ENCODE measurements at regions of chr15 and their contacts with region 1.

Region 1: DNA sequence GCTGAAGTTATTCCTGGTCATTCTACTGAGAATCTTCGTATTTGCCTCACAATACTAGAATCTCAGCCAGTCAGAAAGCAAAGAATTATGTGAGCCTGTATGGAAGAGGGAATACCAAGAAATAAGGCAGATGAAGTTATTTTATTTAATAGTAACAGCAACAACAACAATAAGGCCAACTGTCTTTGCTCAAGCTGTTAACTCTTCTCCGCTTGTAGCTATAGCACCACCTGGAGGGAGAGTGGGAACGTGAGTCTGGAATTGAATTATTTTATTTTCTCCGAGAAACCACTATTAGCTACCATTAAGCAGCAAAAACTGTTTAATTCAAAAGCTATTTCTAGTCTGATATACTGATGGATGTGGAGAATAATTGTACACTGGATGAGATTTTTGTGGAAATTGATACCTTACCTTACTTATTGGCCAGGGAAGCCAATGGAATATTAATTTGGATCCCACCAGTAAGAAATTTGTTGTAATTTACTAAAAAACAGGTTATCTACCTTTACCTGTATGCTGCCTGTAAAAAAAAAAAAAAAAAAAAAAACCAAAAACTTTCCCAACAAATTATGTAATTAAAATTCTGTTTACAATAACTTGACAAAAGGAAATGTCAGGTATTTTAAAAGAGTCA is 50.1 kb downstream of the CALML4 start:
- DNase-seq: peak; percentile 71
- H3K4me3 ChIP-seq: no peak overlapping the region
- H3K27ac ChIP-seq: no peak overlapping the region
- H3K4me1 ChIP-seq: no peaks in the 10 kb centered on the region
- H3K27me3 ChIP-seq: no peaks in the 10 kb centered on the region
- CTCF ChIP-seq: peak; percentile 49 to 58
- POLR2A ChIP-seq: no peak

Region 2: GRCh38 chr15:67839929-67840748 is 314.9 kb before region 1 on chr15 and contains the start of gene RNU6-1:
- CTCF ChIA-PET with region 1: interaction called, 12 read pairs
- POLR2A ChIA-PET with region 1: no interaction called
- dilution Hi-C with region 1: no loop called
- intact Hi-C with region 1: no loop called
- DNase-seq: peak; percentile 93
- H3K4me3 ChIP-seq: peak within 1 kb of the TSS; percentile 69 to 80 (median 75)
- H3K27ac ChIP-seq: peak within 1 kb of the TSS; percentile 82
- H3K4me1 ChIP-seq: peaks cover 25% of the 10 kb centered on the region
- H3K27me3 ChIP-seq: peaks cover 19 to 23% of the 10 kb centered on the region in 2 experiments
- CTCF ChIP-seq: no peak
- POLR2A ChIP-seq: peak; percentile 85
- total RNA-seq, gene RNU6-1: not detected in 2 replicates

Region 3: DNA sequence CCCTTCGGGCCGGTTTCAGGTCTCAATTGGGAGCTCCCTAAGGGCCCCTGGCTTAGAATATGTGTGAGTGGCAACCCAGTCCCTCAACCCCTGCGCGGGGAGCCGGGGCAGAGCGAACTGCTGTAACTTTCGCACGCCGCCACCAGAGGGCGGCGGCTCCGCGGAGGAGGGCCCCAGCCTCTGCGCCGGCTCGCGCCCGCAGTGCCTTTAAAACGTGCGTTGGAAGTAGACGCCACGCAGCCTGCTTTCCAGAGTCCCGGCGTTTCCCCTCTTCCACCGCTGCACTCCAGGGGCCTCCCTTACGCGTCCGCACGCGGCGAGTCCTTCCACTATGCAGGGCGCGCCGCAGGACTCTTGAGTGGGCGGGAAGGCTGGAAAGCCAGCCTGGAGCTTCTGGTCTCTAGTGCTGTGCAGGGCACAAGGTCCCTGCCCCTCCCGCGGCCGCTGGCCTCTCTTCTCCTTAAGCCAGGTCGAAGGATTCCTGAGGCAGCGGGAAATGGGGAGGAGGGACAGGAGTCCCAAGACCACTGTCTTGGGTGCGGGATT is 291.5 kb before region 1 on chr15:
- CTCF ChIA-PET with region 1: interaction called, 139 read pairs
- POLR2A ChIA-PET with region 1: no interaction called
- dilution Hi-C with region 1: no loop called
- intact Hi-C with region 1: loop called (anchors 1 kb)
- DNase-seq: peak; percentile 65
- H3K4me3 ChIP-seq: peak overlapping the region in 2 of 3 experiments; percentile 8 to 35
- H3K27ac ChIP-seq: no peak overlapping the region
- H3K4me1 ChIP-seq: no peaks in the 10 kb centered on the region
- H3K27me3 ChIP-seq: peaks cover 9 to 13% of the 10 kb centered on the region in 2 experiments
- CTCF ChIP-seq: peak; percentile 87 to 97
- POLR2A ChIP-seq: no peak

Region 4: DNA sequence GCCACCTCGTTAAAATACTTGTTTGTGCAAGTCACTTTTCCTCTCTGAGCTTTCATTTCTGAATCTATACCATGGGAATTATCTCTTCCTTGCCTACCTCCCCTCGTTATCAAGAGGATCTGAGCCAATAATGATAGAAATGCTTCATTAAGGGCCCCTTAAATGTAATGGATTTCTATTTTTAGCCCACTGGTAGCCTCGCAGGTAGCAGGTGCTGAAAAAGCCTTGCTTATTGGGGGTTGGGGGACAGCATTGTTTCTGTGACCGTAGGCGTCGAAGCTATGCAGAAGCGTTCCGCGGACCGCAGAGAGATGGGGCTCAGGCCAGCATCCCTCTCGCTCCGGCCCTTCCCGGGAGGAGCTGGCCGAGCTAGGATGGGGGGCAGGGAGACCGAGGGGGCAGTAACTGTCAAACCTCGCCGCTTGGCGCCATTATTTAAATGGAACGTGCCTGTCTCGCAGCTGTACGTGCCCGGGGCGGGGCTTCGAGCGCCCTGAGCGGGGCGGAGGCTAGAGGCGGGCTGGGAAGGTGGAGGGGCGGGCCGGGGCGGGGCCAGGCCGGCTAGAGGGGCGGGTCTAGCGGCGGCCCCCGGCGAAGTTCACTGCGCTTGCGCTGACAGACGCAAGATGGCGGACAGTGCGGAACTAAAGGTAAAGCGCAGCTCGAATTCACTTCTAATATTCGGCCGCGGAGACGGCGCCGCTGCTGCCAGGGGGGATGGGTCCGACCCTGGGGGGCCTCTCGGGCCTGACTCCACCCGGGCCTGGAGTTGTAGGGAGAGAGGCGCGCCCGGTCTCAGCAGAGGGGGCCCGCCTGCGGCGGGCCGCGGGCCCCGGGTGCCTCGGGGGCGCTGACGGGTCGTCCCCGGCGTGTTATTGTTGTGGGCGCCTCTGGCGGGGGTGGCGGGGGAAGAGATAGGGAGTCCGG is 101.1 kb before region 1 on chr15 and contains the start of gene PIAS1:
- CTCF ChIA-PET with region 1: interaction called, 41 read pairs
- POLR2A ChIA-PET with region 1: no interaction called
- dilution Hi-C with region 1: no loop called
- intact Hi-C with region 1: loop called (anchors 2 kb)
- DNase-seq: peak; percentile 95
- H3K4me3 ChIP-seq: peak within 1 kb of the TSS; percentile 88 to 97 (median 91)
- H3K27ac ChIP-seq: peak within 1 kb of the TSS; percentile 39
- H3K4me1 ChIP-seq: peaks cover 15% of the 10 kb centered on the region
- H3K27me3 ChIP-seq: peaks cover 1 to 7% of the 10 kb centered on the region in 2 experiments
- CTCF ChIP-seq: no peak
- POLR2A ChIP-seq: peak; percentile 82
- total RNA-seq, gene PIAS1: 24.2 and 32.3 TPM in 2 replicates

Region 5: GRCh38 chr15:68210821-68211655 is 56.0 kb after region 1 on chr15:
- CTCF ChIA-PET with region 1: no interaction called
- POLR2A ChIA-PET with region 1: interaction called, 3 read pairs
- dilution Hi-C with region 1: no loop called
- intact Hi-C with region 1: loop called (anchors 2 kb)
- DNase-seq: peak; percentile 53
- H3K4me3 ChIP-seq: no peak overlapping the region
- H3K27ac ChIP-seq: no peak overlapping the region
- H3K4me1 ChIP-seq: peaks cover 2% of the 10 kb centered on the region
- H3K27me3 ChIP-seq: no peaks in the 10 kb centered on the region
- CTCF ChIP-seq: peak; percentile 70 to 98
- POLR2A ChIP-seq: no peak